Activated CD4-positive, alpha-beta T cell treated with anti-CD3 and anti-CD28 coated beads for 36 hours (primary cell): ENCODE measurements at regions of chr2 and their contacts with region 1.

Region 1: GRCh38 chr2:27754138-27754588 is 17.4 kb upstream of the MRPL33 start:
- DNase-seq: peak; percentile 92
- ATAC-seq: peak; percentile 99
- H3K4me3 Mint-ChIP-seq: no peak overlapping the region
- H3K27ac Mint-ChIP-seq: no peak overlapping the region
- H3K4me1 Mint-ChIP-seq: peaks cover 3% of the 10 kb centered on the region
- H3K27me3 Mint-ChIP-seq: peaks cover 3% of the 10 kb centered on the region

Region 2: GRCh38 chr2:27765621-27766269 is 11.6 kb after region 1 on chr2:
- CTCF ChIA-PET with region 1: interaction called, 12 read pairs
- POLR2A ChIA-PET with region 1: no interaction called
- intact Hi-C with region 1: no loop called
- DNase-seq: peak; percentile 57
- ATAC-seq: peak; percentile 39
- H3K4me3 Mint-ChIP-seq: peak overlapping the region; percentile 4
- H3K27ac Mint-ChIP-seq: peak overlapping the region; percentile 51
- H3K4me1 Mint-ChIP-seq: peaks cover 11% of the 10 kb centered on the region
- H3K27me3 Mint-ChIP-seq: no peaks in the 10 kb centered on the region

Region 3: GRCh38 chr2:28544919-28545589 is 790.9 kb after region 1 on chr2:
- CTCF ChIA-PET with region 1: no interaction called
- POLR2A ChIA-PET with region 1: no interaction called
- intact Hi-C with region 1: loop called in 1 of 2 experiments (anchors 10 kb)
- DNase-seq: peak; percentile 36
- ATAC-seq: peak; percentile 85
- H3K4me3 Mint-ChIP-seq: no peak overlapping the region
- H3K27ac Mint-ChIP-seq: peak overlapping the region; percentile 13
- H3K4me1 Mint-ChIP-seq: peaks cover 16% of the 10 kb centered on the region
- H3K27me3 Mint-ChIP-seq: no peaks in the 10 kb centered on the region